IMR-90 (cell line): ENCODE measurements at regions of chr1 and their contacts with region 1.

Region 1: DNA sequence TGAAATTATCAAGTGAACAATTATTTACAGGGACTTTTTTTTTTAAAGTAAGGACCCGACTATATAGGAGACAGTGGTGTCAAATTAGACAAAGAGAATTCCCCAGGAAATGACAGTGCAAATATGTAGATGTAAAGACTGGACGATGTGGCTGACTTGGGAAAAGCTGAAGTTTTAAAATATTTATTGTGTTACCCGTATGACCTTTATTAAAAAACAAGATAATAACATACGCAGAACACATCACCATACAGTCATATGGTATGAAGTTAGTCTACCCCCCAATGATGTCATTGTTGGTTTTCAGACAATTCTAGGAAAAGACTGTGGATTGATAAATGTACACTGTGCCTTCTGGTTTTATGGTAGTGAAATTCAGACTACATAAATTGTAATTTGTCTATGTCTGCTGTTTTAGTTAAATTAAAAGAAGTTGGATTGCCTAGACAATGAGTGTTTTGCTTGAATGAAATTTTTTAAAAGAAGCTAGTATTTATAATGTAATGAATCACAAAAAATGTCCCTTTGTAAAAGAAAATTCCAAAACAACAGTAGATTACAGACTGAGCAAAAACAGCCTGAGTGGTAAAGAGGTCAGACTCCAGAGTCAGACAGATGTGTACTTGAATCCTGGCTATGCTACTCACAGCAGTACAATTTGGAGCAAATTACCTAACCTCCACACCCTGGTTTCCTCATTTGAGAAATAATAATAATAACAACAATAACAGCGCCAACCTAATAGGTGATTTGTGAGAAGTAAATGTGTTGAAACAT is 15.5 kb upstream of the PDC start:
- DNase-seq: peak; percentile 90
- ATAC-seq: peak; percentile 81
- H3K4me3 ChIP-seq: no peak overlapping the region
- H3K27ac ChIP-seq: no peak overlapping the region
- H3K4me1 ChIP-seq: peaks cover 3% of the 10 kb centered on the region; the same call in 1 of the 2 replicates
- H3K27me3 ChIP-seq: no peaks in the 10 kb centered on the region
- CTCF ChIP-seq: no peak
- POLR2A ChIP-seq: no peak
- RAD21 ChIP-seq: no peak

Region 2: GRCh38 chr1:185244015-185244747 is 1232.3 kb before region 1 on chr1:
- CTCF ChIA-PET with region 1: no interaction called
- POLR2A ChIA-PET with region 1: no interaction called
- dilution Hi-C with region 1: no loop called
- in situ Hi-C with region 1: no loop called
- intact Hi-C with region 1: no loop called
- DNase-seq: peak; percentile 94
- ATAC-seq: peak; percentile 99
- H3K4me3 ChIP-seq: no peak overlapping the region
- H3K27ac ChIP-seq: no peak overlapping the region
- H3K4me1 ChIP-seq: no peaks in the 10 kb centered on the region; the same call in 1 of the 2 replicates
- H3K27me3 ChIP-seq: no peaks in the 10 kb centered on the region
- CTCF ChIP-seq: no peak
- POLR2A ChIP-seq: no peak
- RAD21 ChIP-seq: no peak

Region 3: DNA sequence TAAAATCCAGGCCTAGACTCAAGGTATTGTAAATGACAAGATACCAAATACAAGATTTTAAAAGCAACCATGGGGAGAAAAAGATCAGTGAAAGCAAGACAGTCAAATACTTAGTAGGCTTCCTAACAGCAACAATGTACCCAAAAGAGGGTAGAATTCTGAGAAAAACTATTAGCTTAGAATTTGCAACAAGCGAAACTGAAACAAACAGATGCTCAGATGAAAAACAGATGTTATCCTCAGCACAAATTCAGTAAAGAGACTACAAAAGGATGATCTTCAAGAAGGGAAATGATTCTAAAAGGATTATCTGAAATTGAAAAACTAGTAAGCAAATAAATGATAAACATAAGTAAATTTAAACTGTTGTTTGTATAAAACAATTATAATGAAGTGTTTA is 55.5 kb before region 1 on chr1:
- CTCF ChIA-PET with region 1: no interaction called
- POLR2A ChIA-PET with region 1: no interaction called
- dilution Hi-C with region 1: no loop called
- in situ Hi-C with region 1: no loop called
- intact Hi-C with region 1: loop called (anchors 5 kb)
- DNase-seq: peak; percentile 27
- ATAC-seq: no peak
- H3K4me3 ChIP-seq: no peak overlapping the region
- H3K27ac ChIP-seq: no peak overlapping the region
- H3K4me1 ChIP-seq: peaks cover 7% of the 10 kb centered on the region
- H3K27me3 ChIP-seq: no peaks in the 10 kb centered on the region
- CTCF ChIP-seq: no peak
- POLR2A ChIP-seq: no peak
- RAD21 ChIP-seq: no peak